ENCODE measurements at regions of chr5 and their contacts with region 1.

Region 1: GRCh38 chr5:10353241-10354047 is at the start of gene MARCHF6:
- DNase-seq: peak; percentile 77
- ATAC-seq: peak; percentile 85
- H3K4me3 ChIP-seq: peak within 1 kb of the TSS; percentile 97
- H3K27ac ChIP-seq: peak within 1 kb of the TSS; percentile 97
- H3K4me1 ChIP-seq: peaks cover 3% of the 10 kb centered on the region; the same call in 1 of the 2 replicates
- H3K27me3 ChIP-seq: no peaks in the 10 kb centered on the region
- CTCF ChIP-seq: no peak
- EP300 ChIP-seq: no peak
- POLR2A ChIP-seq: peak; percentile 97
- RAD21 ChIP-seq: 0 out of 2 replicates have a peak, but pooled peaks have one; percentile 8
- polyA plus RNA-seq, gene MARCHF6: 59.0 to 74.3 TPM

Region 2: DNA sequence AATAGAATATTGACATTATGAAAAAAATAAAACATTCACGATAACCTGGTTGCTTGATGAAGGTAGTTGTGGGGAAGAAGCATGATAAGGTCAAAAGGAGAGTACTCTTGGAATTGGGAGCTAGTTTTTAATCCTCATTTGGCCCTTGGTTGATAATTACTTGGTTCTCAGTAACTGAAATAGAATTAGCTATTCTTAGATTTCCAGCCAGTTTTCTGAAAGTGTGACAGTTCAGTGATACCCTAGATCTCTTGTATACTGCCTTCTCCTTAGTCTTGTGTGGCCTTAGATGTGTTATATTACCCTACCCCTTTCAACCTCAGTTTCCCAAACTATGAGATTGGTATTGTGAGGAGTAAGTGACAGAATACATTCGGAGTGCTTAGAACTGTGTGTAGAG is 17.5 kb after region 1 on chr5:
- CTCF ChIA-PET with region 1: interaction called, 11 read pairs
- POLR2A ChIA-PET with region 1: interaction called, 4 read pairs
- RAD21 ChIA-PET with region 1: interaction called, 5 read pairs
- SMC1A ChIA-PET with region 1: interaction called, 11 read pairs
- in situ Hi-C with region 1: no loop called
- intact Hi-C with region 1: no loop called
- DNase-seq: no peak
- ATAC-seq: no peak
- H3K4me3 ChIP-seq: no peak overlapping the region
- H3K27ac ChIP-seq: no peak overlapping the region
- H3K4me1 ChIP-seq: no peaks in the 10 kb centered on the region
- H3K27me3 ChIP-seq: no peaks in the 10 kb centered on the region
- CTCF ChIP-seq: no peak
- EP300 ChIP-seq: no peak
- POLR2A ChIP-seq: no peak
- RAD21 ChIP-seq: no peak

Region 3: DNA sequence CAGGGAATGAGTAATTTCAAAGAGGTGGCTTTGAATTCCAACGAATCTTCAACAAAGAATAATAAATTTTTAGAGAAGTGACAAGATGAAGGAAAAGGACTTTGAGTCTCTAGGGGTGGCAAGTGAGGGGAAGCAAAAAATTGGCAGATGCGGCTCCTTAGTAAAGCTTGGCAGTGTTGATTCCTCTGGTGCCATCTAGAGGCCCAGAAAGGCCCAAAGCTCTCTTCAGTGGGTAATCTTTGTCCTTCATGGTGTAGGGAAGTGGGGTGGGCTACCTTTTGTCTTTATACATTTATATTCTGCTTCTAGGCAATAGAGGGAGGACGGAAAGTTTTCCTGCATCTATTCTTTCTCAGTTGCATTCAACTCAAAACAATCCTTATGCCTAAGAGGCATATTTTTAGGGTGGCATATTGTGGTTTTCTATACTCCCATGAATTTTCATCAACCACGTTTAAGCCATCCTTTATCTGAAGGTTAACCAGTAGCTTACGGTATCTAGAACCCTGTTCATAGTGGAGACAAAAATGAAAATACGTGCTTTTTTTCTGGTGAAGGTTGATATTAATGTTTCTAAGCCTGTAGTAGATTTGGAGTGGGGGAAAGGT is 70.8 kb after region 1 on chr5:
- CTCF ChIA-PET with region 1: interaction called, 22 read pairs
- POLR2A ChIA-PET with region 1: interaction called, 4 read pairs
- RAD21 ChIA-PET with region 1: interaction called, 4 read pairs
- SMC1A ChIA-PET with region 1: interaction called, 4 read pairs
- in situ Hi-C with region 1: no loop called
- intact Hi-C with region 1: no loop called
- DNase-seq: no peak
- ATAC-seq: peak; percentile 81
- H3K4me3 ChIP-seq: no peak overlapping the region
- H3K27ac ChIP-seq: no peak overlapping the region
- H3K4me1 ChIP-seq: no peaks in the 10 kb centered on the region
- H3K27me3 ChIP-seq: no peaks in the 10 kb centered on the region
- CTCF ChIP-seq: peak; percentile 40 to 47 (median 40)
- EP300 ChIP-seq: no peak
- POLR2A ChIP-seq: no peak
- RAD21 ChIP-seq: peak; percentile 43

Region 4: DNA sequence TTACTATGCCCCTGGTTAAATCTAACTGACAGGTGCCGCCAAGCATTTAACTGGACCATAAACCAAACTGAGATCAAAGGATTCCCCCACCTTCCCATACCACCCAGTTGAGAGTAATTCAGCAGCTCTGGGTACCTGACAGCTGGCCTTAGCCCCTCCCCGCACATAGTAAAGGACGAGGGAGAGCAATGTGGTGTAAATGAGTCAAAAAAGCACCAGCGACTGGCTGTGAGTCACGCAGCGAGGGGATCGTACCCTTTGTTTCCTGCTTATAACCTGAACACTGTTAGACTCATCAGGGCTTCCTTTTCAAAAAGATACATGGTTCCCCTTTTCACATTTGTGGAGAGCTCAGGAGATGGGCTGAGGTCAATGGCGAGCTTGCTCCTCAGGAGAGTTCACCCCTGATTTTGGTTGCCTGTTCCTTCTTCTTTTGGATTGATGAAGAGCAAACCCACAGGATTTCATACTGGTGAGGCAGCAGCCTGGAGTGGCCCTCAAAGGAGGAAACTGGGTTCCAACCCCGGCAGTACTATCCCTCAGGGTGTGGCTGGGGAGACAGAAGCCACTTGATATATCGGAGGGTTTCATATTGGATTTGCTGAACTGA is 281.9 kb after region 1 on chr5:
- CTCF ChIA-PET with region 1: interaction called, 6 read pairs
- POLR2A ChIA-PET with region 1: interaction called, 5 read pairs
- RAD21 ChIA-PET with region 1: interaction called, 3 read pairs
- SMC1A ChIA-PET with region 1: no interaction called
- in situ Hi-C with region 1: no loop called
- intact Hi-C with region 1: loop called (anchors 5 kb)
- DNase-seq: peak; percentile 94
- ATAC-seq: peak; percentile 66
- H3K4me3 ChIP-seq: peak overlapping the region; percentile 51
- H3K27ac ChIP-seq: peak overlapping the region; percentile 93
- H3K4me1 ChIP-seq: peaks cover 59% of the 10 kb centered on the region
- H3K27me3 ChIP-seq: no peaks in the 10 kb centered on the region
- CTCF ChIP-seq: no peak
- EP300 ChIP-seq: peak; percentile 89 to 98
- POLR2A ChIP-seq: peak; percentile 39; the same call in 1 of the 2 replicates
- RAD21 ChIP-seq: peak; percentile 5; the same call in 1 of the 2 replicates

Measured in GM12878 (cell line).